AG04449 (cell line): ENCODE measurements at regions of chr19 and their contacts with region 1.

Region 1: DNA sequence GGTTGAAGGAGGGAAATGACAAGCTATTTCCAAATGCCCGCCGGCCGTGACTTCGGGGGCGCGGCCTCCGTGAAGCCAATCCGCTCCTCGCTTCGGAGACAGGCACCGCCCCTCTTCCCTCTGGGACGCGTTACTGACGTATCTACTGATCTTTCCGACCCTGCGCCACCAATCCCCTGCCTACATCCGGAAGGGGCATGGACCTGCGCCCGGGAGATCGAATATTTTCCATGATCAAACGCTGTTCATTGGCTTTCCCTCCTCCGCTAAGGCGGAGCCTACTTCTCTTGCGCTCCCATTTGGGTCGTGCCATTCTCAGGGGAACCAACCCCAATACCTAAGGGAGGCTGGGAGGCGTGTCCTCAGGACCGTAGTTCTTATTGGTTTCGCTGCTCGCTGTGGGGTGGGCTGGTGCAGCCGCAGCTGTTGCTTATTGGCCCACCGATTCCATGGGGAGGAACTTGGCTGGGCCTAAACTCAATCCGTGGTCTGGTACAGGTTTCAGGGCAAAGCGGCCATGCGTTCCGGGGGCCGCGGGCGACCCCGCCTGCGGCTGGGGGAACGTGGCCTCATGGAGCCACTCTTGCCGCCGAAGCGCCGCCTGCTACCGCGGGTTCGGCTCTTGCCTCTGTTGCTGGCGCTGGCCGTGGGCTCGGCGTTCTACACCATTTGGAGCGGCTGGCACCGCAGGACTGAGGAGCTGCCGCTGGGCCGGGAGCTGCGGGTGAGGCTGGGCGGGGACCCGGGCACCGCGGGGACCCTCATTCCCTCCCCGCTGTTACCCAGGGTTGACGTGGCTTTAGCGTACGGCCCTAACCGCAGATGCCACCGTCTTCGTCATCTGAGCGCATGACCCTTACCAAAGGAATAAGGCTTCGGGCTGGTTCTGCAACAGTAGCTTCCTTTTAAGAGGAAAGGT is at the start of gene QPCTL:
- DNase-seq: peak; percentile 99
- H3K4me3 ChIP-seq: peak within 1 kb of the TSS; percentile 95
- CTCF ChIP-seq: no peak

Region 2: GRCh38 chr19:45615795-45616708 is 76.4 kb before region 1 on chr19:
- CTCF ChIA-PET with region 1: interaction called, 11 read pairs
- POLR2A ChIA-PET with region 1: no interaction called
- DNase-seq: no peak
- H3K4me3 ChIP-seq: no peak overlapping the region
- CTCF ChIP-seq: no peak

Region 3: GRCh38 chr19:45681391-45682015 is 10.9 kb before region 1 on chr19:
- CTCF ChIA-PET with region 1: interaction called, 122 read pairs
- POLR2A ChIA-PET with region 1: no interaction called
- DNase-seq: no peak
- H3K4me3 ChIP-seq: peak overlapping the region; percentile 43
- CTCF ChIP-seq: peak; percentile 95

Region 4: DNA sequence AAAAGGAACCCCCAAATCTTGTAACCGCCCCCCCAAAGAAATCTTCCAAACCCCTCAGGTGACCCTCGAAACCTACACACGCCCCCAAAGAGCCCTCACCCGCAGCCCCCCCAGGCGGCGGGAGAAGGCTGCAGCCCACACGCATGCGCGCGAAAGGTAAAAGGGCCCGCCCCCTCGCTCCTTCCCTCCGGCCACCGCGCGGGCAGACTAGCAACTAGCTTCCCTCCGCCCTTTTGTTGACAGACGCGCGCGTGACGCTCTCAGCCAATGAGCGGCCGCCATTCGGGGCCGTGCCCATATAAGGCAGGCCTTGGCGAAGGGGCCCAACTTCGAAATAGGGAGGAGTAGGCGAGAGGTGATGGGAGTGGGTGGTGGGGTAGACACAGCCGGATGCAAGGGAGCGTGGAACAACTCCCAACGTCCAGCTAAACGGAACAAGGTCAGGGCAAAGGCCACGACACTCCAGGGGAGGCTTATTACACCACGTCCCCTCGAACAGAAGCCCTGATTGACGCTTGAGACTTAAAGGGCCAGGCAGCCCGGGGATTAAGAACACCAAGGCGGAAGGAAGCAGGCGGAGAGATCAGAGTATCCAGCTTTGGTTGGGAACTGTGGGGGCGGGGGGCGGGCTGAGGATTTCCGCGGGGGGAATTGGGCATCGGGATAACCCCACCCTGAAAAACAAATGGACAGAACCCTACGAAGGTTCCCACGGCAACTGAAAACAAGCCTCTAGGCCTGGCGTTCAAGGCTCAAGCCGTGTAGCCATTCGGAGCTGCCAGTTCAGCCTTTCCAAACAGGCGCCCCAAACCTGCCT is 24.9 kb after region 1 on chr19:
- CTCF ChIA-PET with region 1: interaction called, 198 read pairs
- POLR2A ChIA-PET with region 1: interaction called, 9 read pairs
- DNase-seq: peak; percentile 88
- H3K4me3 ChIP-seq: peak overlapping the region; percentile 75
- CTCF ChIP-seq: peak; percentile 9

Region 5: GRCh38 chr19:45730389-45731288 is 38.2 kb after region 1 on chr19 and contains the start of gene FBXO46:
- CTCF ChIA-PET with region 1: interaction called, 19 read pairs
- POLR2A ChIA-PET with region 1: interaction called, 4 read pairs
- DNase-seq: peak; percentile 90
- H3K4me3 ChIP-seq: peak within 1 kb of the TSS; percentile 88
- CTCF ChIP-seq: peak; percentile 43

Region 6: DNA sequence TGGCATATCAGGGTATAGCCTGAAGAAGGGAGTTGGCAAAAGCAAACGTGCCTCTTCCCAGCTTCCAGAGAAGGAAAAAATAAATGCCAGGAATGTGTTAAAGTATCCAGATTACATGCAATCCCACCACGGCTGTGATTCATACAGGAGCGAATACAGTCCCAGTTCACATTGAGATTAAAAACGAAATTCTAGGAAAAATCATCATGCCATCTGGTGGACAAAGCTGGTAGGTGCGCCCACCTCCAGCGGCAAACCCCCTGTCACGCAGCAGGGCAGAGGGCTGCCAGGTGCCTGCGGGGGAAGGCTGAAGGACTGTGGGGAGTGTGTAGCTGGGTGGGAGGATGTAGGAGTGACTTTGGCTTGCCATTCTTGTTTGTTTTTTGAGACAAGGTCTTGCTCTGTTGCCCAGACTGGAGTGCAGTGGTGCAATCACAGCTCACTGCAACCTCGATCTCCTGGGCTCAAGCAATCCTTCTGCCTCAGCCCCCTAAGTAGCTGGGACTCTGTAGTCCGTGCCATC is 106.6 kb after region 1 on chr19:
- CTCF ChIA-PET with region 1: interaction called, 23 read pairs
- POLR2A ChIA-PET with region 1: no interaction called
- DNase-seq: peak; percentile 54
- H3K4me3 ChIP-seq: no peak overlapping the region
- CTCF ChIP-seq: peak; percentile 76

Region 7: DNA sequence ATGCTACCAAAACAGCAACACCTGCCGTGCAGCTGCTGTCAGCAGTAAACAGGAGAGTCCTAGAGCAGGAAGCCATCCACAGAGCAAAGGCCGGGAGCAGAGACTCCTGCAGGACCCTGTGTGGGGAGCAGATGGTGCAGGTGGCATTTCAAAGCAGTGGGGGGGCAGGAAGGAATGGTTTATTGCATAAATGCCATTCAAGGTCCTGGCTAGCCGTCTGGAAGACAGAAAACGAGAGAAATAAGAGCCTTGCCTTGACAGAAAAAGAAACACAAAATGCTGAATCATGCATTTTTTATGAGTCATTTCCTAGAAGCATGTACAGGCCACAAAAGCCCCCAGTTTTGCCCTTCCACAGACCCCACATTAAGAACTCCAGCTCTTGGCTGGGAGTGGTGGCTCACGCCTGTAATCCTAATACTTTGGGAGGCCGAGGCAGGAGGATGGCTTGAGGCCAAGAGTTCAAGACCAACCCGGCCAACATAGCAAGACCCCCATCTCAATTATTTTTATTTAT is 117.3 kb after region 1 on chr19:
- CTCF ChIA-PET with region 1: no interaction called
- POLR2A ChIA-PET with region 1: no interaction called
- DNase-seq: peak; percentile 23
- H3K4me3 ChIP-seq: no peak overlapping the region; the same call in 1 of the 2 replicates
- CTCF ChIP-seq: no peak